Cardiac septum (tissue), 1 donor: ENCODE measurements at regions of chr20 and their contacts with region 1.

Region 1: DNA sequence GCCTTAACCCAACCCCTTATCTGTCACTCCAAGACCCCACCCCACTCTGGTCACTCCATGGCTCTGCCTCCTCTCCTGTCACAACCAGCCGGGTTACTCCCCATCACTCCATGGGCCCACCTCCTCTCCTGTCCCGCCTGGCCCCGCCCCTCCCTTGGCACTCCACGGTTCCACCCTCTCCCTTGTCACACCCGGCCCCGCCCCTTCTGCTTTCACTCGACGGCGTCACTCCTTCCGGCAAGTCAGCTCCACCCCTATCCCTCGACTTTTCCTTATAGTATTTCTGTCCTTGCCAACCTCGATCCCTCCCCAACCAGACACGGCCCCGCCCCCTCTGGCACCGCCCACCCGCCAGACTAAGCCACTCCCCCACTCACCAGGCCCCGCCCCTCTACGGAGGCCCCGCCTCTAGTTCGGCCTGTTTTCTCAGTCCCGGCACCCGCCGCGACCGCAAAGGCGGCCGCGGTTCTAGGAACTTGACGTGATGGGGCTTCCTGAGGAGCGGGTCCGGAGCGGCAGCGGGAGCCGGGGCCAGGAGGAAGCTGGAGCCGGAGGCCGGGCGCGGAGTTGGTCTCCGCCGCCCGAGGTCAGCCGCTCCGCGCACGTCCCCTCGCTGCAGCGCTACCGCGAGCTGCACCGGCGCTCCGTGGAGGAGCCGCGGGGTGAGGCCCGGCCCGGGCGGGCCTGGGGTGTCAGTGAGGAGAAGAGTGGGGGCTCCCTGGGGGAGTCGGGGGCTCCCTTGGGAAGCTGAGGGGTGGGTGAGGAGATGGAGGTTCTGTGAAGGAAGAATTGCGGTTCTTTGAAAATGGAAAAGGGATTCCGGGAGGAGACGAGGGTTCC is at the start of gene ACSS2:
- DNase-seq: peak; percentile 100
- total RNA-seq, gene ACSS2: 73.8 TPM

Region 2: GRCh38 chr20:34955232-34956040 is 79.1 kb after region 1 on chr20 and contains the starts of genes GSS and MYH7B:
- intact Hi-C with region 1: loop called (anchors 1 kb)
- DNase-seq: peak; percentile 99
- total RNA-seq, gene GSS: 27.5 TPM
- total RNA-seq, gene MYH7B: 238 TPM

Region 3: GRCh38 chr20:35008411-35009342 is 132.3 kb after region 1 on chr20:
- intact Hi-C with region 1: loop called (anchors 5 kb)
- DNase-seq: peak; percentile 74

Region 4: GRCh38 chr20:35092524-35093266 is 216.3 kb after region 1 on chr20 and contains the start of gene TRPC4AP:
- intact Hi-C with region 1: loop called (anchors 2 kb)
- DNase-seq: peak; percentile 97
- total RNA-seq, gene TRPC4AP: 34.9 TPM